ENCODE measurements at regions of chr15 and their contacts with region 1.

Region 1: GRCh38 chr15:32994810-32995424 is 199.6 kb downstream of the FMN1 start:
- DNase-seq: peak; percentile 7
- ATAC-seq: no peak
- H3K4me3 ChIP-seq: no peak overlapping the region
- H3K27ac ChIP-seq: no peak overlapping the region
- H3K4me1 ChIP-seq: no peaks in the 10 kb centered on the region
- H3K27me3 ChIP-seq: no peaks in the 10 kb centered on the region; a peak in 1 of 5 replicates
- CTCF ChIP-seq: peak; percentile 44
- EP300 ChIP-seq: no peak
- POLR2A ChIP-seq: no peak
- RAD21 ChIP-seq: no peak

Region 2: GRCh38 chr15:32649342-32649741 is 345.6 kb before region 1 on chr15:
- CTCF ChIA-PET with region 1: interaction called, 6 read pairs
- POLR2A ChIA-PET with region 1: no interaction called
- in situ Hi-C with region 1: no loop called
- intact Hi-C with region 1: loop called (anchors 1 kb)
- DNase-seq: peak; percentile 63
- ATAC-seq: peak; percentile 90
- H3K4me3 ChIP-seq: no peak overlapping the region
- H3K27ac ChIP-seq: no peak overlapping the region
- H3K4me1 ChIP-seq: peaks cover 9% of the 10 kb centered on the region
- H3K27me3 ChIP-seq: no peaks in the 10 kb centered on the region; a peak in 1 of 5 replicates
- CTCF ChIP-seq: peak; percentile 53
- EP300 ChIP-seq: no peak
- POLR2A ChIP-seq: no peak
- RAD21 ChIP-seq: no peak

Region 3: GRCh38 chr15:32663671-32664070 is 331.2 kb before region 1 on chr15:
- CTCF ChIA-PET with region 1: interaction called, 17 read pairs
- POLR2A ChIA-PET with region 1: no interaction called
- in situ Hi-C with region 1: loop called (anchors 5 kb)
- intact Hi-C with region 1: no loop called
- DNase-seq: no peak
- ATAC-seq: no peak
- H3K4me3 ChIP-seq: no peak overlapping the region
- H3K27ac ChIP-seq: no peak overlapping the region
- H3K4me1 ChIP-seq: no peaks in the 10 kb centered on the region
- H3K27me3 ChIP-seq: no peaks in the 10 kb centered on the region
- CTCF ChIP-seq: no peak
- EP300 ChIP-seq: no peak
- POLR2A ChIP-seq: no peak
- RAD21 ChIP-seq: no peak

Region 4: DNA sequence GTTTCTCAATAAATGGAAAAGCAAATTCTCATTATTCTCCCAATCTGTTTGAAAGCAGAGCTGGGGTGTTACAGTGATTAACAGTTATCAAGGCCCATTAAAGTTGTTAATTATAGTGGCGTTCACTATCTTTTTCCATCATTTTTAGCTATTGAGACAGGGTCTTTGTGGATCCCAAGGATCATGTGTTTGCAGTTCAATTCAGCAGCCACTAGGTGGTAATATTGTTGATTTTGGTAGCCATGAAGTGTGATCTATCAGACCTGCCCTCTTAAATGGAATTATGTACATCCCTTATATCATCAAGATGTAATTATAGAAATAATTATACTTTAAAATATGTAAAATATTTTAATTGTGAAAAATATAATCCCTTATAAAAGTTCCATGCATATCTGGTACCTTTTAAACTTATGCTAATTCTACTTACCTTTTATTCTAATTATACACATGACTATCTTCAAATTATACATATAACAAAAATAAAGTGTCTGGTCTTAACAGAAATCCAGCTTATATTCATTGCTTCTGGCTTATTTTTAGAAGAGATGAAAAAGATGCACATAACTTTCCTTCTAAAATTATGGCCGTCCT is 150.7 kb before region 1 on chr15:
- CTCF ChIA-PET with region 1: no interaction called
- POLR2A ChIA-PET with region 1: no interaction called
- in situ Hi-C with region 1: no loop called
- intact Hi-C with region 1: loop called (anchors 10 kb)
- DNase-seq: peak; percentile 30
- ATAC-seq: no peak
- H3K4me3 ChIP-seq: no peak overlapping the region
- H3K27ac ChIP-seq: no peak overlapping the region
- H3K4me1 ChIP-seq: peaks cover 3% of the 10 kb centered on the region
- H3K27me3 ChIP-seq: no peaks in the 10 kb centered on the region; a peak in 1 of 5 replicates
- CTCF ChIP-seq: peak; percentile 61
- EP300 ChIP-seq: no peak
- POLR2A ChIP-seq: no peak
- RAD21 ChIP-seq: no peak

Region 5: DNA sequence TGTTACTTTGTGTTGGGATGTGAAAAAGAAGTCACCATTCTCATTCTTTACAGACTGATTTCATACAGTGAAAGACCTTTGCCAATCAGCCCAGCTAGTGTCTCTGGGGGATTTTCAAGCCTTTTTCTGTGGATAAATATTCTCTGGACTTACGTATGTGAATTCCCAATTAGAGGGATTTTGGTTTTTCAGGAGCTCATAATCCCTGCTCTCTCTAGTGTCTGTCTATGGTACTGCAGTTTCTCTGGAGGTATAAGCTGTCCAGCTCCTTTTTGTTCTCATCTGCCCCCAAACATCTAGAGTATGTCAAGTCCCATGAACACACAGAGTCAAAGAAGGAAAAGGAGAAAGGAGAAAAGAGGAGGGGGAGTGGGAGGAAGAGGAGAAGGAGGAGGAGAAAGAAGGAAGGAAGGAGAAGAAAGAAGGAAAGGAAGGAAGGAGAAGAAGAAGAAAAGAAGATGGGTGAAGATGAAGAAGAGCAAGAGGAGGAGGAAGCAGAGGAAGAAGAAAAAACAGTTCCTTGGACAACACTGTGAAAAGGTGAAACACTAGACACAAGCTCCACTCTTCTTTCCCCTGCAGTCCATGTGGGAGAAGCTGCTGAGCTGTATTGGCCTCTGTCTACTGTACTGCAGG is 58.5 kb before region 1 on chr15:
- CTCF ChIA-PET with region 1: no interaction called
- POLR2A ChIA-PET with region 1: no interaction called
- in situ Hi-C with region 1: no loop called
- intact Hi-C with region 1: no loop called
- DNase-seq: peak; percentile 16
- ATAC-seq: peak; percentile 68
- H3K4me3 ChIP-seq: no peak overlapping the region
- H3K27ac ChIP-seq: no peak overlapping the region
- H3K4me1 ChIP-seq: no peaks in the 10 kb centered on the region
- H3K27me3 ChIP-seq: no peaks in the 10 kb centered on the region
- CTCF ChIP-seq: peak; percentile 53
- EP300 ChIP-seq: no peak
- POLR2A ChIP-seq: no peak
- RAD21 ChIP-seq: no peak

Measured in HepG2 (cell line).